SK-N-SH (cell line): ENCODE measurements at regions of chr12 and their contacts with region 1.

Region 1: DNA sequence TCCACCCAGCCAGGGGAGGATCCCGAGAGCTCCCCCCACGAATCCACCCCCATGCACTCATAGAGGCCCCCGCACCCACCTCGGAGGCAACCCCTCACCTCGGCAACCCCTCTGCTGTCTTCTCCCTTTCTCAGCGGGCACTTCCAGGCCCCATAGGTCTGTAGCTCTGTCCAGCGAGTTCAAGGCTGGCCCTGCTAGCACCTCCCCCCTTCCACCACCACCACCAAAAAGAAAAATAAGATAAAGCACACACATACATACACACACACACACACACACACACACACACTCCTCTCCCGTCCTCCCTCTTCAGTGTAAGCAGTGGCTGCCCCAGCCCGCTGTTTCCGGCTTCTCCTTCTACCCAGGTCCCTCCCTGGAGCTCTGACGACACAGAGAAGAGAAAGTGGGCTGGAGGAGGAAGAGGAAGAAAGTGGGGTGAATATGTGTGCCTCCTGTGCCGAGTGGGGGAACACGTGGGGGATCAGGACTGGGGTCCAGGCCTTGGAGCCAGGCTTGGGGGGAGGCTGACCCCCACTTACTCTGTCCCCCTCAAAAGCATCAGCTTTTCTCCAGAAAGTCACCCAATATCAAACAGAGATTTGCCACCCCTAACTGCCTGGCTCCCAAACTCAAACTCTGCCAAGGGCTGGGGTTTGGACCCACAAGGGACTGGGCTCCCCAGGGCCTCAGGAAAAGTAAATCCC is at the start of gene STAT6:
- DNase-seq: no peak
- H3K4me3 ChIP-seq: peak within 1 kb of the TSS; percentile 6 to 46; a peak in 2 of 4 replicates
- H3K27ac ChIP-seq: peak within 1 kb of the TSS; percentile 3 to 28; a peak in 2 of 4 replicates
- H3K4me1 ChIP-seq: peaks cover 0 to 9% of the 10 kb centered on the region in 2 experiments; a peak in 2 of 4 replicates
- H3K27me3 ChIP-seq: no peaks in the 10 kb centered on the region
- CTCF ChIP-seq: 0 out of 2 replicates have a peak, but pooled peaks have one; percentile 9
- EP300 ChIP-seq: no peak
- RAD21 ChIP-seq: peak; percentile 23; the same call in 1 of the 2 replicates
- polyA plus RNA-seq, gene STAT6: 0.15 and 0.42 TPM in 2 replicates

Region 2: DNA sequence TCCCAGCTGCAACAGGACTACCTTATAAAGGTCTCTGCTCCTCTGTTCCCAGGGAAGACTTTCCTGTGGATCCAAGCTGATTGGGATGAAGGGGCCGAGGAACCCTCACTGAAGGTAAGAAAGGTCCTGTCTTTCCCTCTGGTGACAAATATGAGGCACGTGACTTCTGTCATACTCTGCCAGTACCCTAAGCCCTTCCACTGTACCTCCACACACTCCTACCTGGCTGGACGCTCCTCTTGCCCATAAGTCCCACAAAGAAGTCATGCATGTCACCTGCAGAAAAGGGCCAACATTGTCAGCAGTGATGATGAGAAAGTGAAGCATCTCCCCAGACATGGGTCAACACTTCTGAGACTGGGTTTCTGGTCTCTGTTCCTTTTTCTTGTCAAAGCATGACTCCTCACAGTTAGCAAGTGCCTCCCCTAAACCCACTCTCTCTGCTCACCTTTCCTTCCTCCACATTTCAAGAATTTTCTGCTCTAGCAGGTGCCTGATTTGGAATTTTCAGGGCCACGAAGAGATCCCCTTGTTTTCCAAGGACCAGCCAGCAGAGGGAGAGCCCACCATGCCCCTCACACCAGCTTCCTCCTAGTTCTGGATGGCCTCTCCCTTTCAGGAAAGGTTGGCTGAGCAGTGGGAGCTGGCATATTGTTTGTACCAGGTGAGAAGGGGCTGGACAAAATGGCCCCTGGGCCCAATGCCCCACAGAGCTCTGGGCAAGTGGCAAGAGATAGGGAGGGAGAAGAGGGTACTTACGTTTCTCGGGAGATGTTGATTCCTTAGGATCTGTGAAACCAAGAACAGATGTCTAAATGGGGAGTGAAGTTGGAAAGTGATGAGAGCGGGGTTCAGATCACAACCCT is 98.3 kb before region 1 on chr12:
- CTCF ChIA-PET with region 1: interaction called, 43 read pairs
- POLR2A ChIA-PET with region 1: no interaction called
- DNase-seq: no peak
- H3K4me3 ChIP-seq: no peak overlapping the region
- H3K27ac ChIP-seq: no peak overlapping the region
- H3K4me1 ChIP-seq: peaks cover 0 to 8% of the 10 kb centered on the region in 2 experiments; a peak in 1 of 4 replicates
- H3K27me3 ChIP-seq: peaks cover 38% of the 10 kb centered on the region
- CTCF ChIP-seq: no peak
- EP300 ChIP-seq: no peak
- RAD21 ChIP-seq: peak; percentile 56

Region 3: DNA sequence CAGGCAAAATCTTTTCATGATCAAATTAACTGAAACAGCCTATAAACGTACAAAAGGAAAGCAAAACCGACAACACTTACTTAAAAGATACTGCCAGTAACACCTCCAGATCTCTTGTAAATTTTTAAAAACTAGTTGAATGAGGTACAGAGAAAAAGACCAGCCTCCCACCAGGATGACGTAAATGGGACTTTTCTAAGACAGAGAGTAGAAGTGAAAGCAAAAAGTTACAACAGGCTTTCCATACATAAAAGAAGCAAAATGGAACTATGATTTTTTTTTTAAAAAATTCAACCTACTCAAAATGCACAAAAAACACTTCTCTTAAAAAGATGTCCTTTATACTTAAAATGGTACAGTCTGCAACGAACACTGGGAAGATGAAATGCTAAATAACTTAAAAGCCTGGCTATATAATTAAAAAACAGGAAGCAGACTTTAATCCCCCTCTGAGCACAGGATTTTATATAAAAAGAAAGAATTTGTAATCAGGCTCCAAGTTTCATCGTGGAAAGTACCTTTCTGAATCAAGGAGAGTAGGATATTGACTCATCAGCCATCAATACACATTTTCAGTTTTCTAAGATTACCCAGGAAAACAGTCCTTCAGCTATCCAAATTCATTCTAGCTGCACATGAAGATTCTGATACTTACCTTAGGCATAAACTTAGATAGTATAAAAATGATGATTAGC is 47.0 kb before region 1 on chr12:
- CTCF ChIA-PET with region 1: interaction called, 339 read pairs
- POLR2A ChIA-PET with region 1: interaction called, 23 read pairs
- DNase-seq: no peak
- H3K4me3 ChIP-seq: no peak overlapping the region
- H3K27ac ChIP-seq: peak overlapping the region in 1 of 2 experiments; percentile 10; a peak in 1 of 4 replicates
- H3K4me1 ChIP-seq: peaks cover 0 to 7% of the 10 kb centered on the region in 2 experiments; a peak in 1 of 4 replicates
- H3K27me3 ChIP-seq: no peaks in the 10 kb centered on the region
- CTCF ChIP-seq: no peak
- EP300 ChIP-seq: no peak
- RAD21 ChIP-seq: no peak

Region 4: DNA sequence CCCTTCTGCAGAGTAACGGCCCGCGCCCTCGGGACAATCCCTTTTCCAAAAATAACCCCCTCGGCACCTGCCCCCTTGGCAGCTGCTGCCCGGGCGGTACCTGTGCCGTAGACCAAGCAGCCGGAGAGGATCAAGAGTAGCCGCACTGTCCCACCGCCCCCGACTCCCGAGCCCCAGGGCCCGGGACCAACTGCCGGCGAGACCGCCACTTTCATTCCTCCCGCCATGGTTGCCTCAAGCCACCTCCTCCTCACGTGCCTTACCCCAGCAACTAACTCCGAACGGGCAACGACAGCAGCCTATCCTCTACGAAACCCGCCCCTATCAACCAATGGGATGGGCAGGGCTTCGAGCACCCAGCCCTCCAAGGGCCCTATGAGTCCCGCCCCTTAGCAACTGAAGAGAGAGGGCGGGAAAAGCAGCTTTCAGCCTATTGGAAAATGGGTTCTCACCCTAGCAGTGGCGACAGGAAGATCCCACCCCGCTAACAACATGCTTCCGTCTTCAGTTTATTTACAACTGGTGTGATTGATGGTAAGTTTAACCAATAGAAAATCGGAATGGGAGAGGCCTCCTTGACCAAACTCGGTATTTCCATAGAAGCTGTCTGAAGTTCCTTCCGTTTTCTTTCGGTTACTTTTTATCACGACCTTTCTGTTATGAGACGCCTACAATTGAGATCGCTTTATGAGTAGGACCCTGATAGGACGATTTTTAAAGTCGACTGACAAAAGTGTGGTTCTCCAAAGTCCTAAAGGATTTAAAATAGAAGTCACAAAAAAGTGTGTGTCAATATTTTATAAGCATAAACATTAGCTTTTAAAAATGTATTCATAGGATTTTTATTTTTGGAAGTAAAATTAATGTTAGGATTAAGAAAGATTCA is 32.4 kb before region 1 on chr12 and contains the start of gene NEMP1:
- CTCF ChIA-PET with region 1: interaction called, 339 read pairs
- POLR2A ChIA-PET with region 1: interaction called, 7 read pairs
- DNase-seq: peak; percentile 95
- H3K4me3 ChIP-seq: peak within 1 kb of the TSS; percentile 67 to 93
- H3K27ac ChIP-seq: peak within 1 kb of the TSS; percentile 77 to 79
- H3K4me1 ChIP-seq: peaks cover 0 to 4% of the 10 kb centered on the region in 2 experiments; a peak in 2 of 4 replicates
- H3K27me3 ChIP-seq: no peaks in the 10 kb centered on the region
- CTCF ChIP-seq: no peak
- EP300 ChIP-seq: no peak; a peak in 1 of 4 replicates
- RAD21 ChIP-seq: no peak
- polyA plus RNA-seq, gene NEMP1: 6.2 and 8.8 TPM in 2 replicates

Region 5: GRCh38 chr12:57096099-57096572 is 15.0 kb before region 1 on chr12:
- CTCF ChIA-PET with region 1: interaction called, 107 read pairs
- POLR2A ChIA-PET with region 1: interaction called, 6 read pairs
- DNase-seq: peak; percentile 10
- H3K4me3 ChIP-seq: no peak overlapping the region
- H3K27ac ChIP-seq: peak overlapping the region in 1 of 2 experiments; percentile 43; a peak in 1 of 4 replicates
- H3K4me1 ChIP-seq: peaks cover 4 to 12% of the 10 kb centered on the region in 2 experiments; a peak in 2 of 4 replicates
- H3K27me3 ChIP-seq: no peaks in the 10 kb centered on the region
- CTCF ChIP-seq: no peak
- EP300 ChIP-seq: no peak
- RAD21 ChIP-seq: no peak

Region 6: DNA sequence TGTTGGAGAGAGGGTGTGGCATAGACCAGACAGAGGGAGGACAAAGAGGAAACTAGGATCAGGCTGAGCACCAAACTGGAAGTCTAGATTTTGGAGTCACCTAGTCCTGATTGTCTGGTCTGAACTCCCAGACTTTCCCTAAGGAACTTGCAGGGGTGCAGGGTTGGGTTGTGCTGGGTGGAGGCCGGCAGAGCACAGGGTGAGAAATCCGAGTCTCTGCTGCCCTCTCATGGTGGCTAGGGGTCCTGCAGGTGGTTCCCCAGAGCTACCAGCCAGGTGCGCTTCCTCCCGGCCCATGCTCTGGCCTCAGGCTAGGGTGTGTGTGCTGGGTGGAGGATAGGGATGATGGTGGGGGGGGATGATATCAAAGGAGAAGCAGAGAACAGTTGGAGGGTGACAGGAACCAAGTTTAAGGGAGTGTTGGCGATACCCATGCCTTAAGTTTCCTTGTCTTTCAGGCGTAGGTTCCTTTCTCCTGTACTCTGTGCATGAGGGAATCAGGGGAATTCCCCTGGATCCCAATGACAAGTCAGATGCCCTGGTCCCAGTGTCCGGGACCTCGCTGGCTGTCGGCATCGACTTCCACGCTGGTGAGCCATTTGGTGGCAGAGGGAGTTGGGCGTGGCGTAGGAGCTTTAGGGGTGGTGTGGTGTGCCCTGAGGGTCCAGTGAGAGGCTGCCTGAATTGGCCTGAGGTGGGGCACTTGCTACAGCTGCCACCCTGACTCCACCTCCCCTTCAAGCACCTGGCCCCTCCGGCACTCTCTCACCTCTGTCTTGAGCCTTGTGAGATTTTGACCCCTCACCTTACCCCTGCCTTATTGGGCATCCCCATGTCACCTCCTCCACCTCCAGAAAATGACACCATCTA is 72.0 kb after region 1 on chr12:
- CTCF ChIA-PET with region 1: interaction called, 416 read pairs
- POLR2A ChIA-PET with region 1: no interaction called
- DNase-seq: peak; percentile 96
- H3K4me3 ChIP-seq: no peak overlapping the region
- H3K27ac ChIP-seq: no peak overlapping the region
- H3K4me1 ChIP-seq: no peaks in the 10 kb centered on the region
- H3K27me3 ChIP-seq: no peaks in the 10 kb centered on the region
- CTCF ChIP-seq: peak; percentile 87
- EP300 ChIP-seq: no peak
- RAD21 ChIP-seq: peak; percentile 90